PC-3 (cell line): ENCODE measurements at regions of chr12 and their contacts with region 1.

Region 1: DNA sequence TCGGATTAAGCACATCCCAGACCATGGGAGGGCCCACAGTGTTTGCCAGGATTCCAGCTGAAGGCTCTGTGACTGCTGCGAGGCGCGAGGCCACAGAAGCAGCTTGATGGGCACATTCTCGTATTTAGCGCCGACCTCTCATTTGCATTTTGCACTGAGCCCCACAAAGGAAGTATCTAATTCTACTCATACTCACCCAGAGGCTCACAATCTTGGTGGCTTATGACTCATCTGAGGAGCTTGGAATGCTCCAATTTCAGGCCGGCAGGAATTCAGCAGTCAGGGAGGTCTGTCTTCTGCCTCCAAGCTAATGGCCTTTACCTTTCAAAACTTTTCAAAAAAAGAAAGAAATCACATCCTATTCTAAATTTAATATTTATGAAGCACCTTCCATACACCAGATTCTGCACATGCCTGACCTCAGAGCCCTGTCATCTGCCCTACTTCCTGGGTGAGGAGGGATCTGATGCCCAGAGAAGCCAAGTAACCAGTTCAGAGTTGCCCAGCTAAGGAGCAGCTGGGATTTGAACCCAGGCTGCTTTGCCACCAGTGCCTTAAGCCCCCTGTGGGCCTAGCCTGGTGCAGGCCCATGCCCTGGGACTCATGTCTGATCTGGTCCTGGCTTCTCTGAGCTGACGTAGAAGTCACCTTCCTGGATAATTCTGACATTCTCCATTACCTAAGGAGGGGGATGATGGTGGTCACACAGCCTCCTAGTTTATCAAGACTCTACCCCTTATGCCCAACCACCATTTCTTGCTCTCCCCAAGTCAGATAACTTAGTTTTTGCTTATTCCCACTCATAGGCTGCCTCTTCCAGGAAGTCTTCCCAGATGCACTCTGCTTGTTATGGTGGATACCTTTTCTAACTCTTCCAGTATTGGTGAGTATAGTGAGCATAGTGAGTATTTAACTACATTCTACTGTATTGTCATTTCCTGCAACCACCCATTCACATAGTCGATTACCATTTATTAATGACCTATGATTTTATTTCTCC is 198.9 kb downstream of the RBM19 start:
- DNase-seq: peak; percentile 91
- ATAC-seq: peak; percentile 97
- H3K4me3 ChIP-seq: no peak overlapping the region
- H3K27ac ChIP-seq: no peak overlapping the region
- H3K4me1 ChIP-seq: peaks cover 15% of the 10 kb centered on the region
- H3K27me3 ChIP-seq: no peaks in the 10 kb centered on the region
- CTCF ChIP-seq: no peak

Region 2: GRCh38 chr12:113697643-113698509 is 69.3 kb before region 1 on chr12:
- CTCF ChIA-PET with region 1: no interaction called
- POLR2A ChIA-PET with region 1: no interaction called
- intact Hi-C with region 1: loop called (anchors 2 kb)
- DNase-seq: peak; percentile 48
- ATAC-seq: peak; percentile 56
- H3K4me3 ChIP-seq: no peak overlapping the region
- H3K27ac ChIP-seq: no peak overlapping the region
- H3K4me1 ChIP-seq: peaks cover 13% of the 10 kb centered on the region; the same call in 1 of the 2 replicates
- H3K27me3 ChIP-seq: peaks cover 11% of the 10 kb centered on the region
- CTCF ChIP-seq: no peak

Region 3: GRCh38 chr12:113727651-113728061 is 39.5 kb before region 1 on chr12:
- CTCF ChIA-PET with region 1: no interaction called
- POLR2A ChIA-PET with region 1: no interaction called
- intact Hi-C with region 1: loop called (anchors 5 kb)
- DNase-seq: peak; percentile 99
- ATAC-seq: peak; percentile 90
- H3K4me3 ChIP-seq: no peak overlapping the region
- H3K27ac ChIP-seq: peak overlapping the region; percentile 80
- H3K4me1 ChIP-seq: peaks cover 34% of the 10 kb centered on the region
- H3K27me3 ChIP-seq: no peaks in the 10 kb centered on the region
- CTCF ChIP-seq: no peak